K562 (cell line): ENCODE measurements at regions of chr9 and their contacts with region 1.

Region 1: DNA sequence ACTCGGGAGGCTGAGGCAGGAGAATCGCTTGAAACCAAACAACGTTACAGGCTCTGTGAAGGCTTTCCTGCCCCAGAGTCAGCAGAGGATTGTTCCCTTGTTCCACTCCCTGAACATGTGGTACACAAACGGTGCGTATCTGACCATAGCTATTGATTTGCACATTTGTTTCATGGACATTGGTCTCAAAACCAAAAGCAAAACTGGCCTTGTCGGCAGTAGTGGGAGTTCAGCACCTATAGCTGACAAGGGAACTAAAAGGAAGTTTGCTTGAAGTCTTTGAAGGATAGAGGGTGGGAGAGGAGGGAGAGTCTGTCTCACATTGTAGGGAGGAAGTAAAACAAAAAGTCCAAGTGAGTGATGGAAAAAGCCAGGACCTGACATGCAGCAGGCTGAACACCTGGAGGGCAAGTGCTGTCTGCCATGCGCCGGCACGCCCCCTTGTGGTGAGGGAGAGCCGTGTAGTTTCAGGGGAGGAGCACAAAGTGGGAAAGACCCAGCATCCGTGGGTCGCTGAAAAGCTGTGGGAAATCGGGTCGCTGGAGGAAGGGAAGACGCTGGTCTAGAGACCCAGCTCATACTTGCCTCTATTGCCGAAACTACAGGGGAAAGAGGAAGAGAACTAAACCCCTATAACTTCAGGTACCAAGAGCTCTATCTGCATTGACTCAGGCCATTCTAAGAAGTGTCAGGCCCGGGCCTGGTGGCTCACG is 58.0 kb downstream of the RAD23B start:
- DNase-seq: peak; percentile 74 to 82 (median 80)
- ATAC-seq: peak; percentile 90
- H3K4me3 ChIP-seq: no peak overlapping the region
- H3K27ac ChIP-seq: no peak overlapping the region
- H3K4me1 ChIP-seq: no peaks in the 10 kb centered on the region; a peak in 1 of 5 replicates
- H3K27me3 ChIP-seq: no peaks in the 10 kb centered on the region
- CTCF ChIP-seq: peak; percentile 84 to 94 (median 88)
- EP300 ChIP-seq: no peak
- POLR2A ChIP-seq: peak; percentile 49; the same call in 1 of the 2 replicates
- RAD21 ChIP-seq: peak; percentile 59 to 78

Region 2: GRCh38 chr9:107137495-107138202 is 203.4 kb before region 1 on chr9:
- CTCF ChIA-PET with region 1: no interaction called
- POLR2A ChIA-PET with region 1: no interaction called
- in situ Hi-C with region 1: no loop called
- intact Hi-C with region 1: loop called (anchors 10 kb)
- DNase-seq: peak; percentile 37 to 72 (median 60)
- ATAC-seq: peak; percentile 89
- H3K4me3 ChIP-seq: no peak overlapping the region
- H3K27ac ChIP-seq: no peak overlapping the region
- H3K4me1 ChIP-seq: no peaks in the 10 kb centered on the region
- H3K27me3 ChIP-seq: peaks cover 0 to 14% of the 10 kb centered on the region in 2 experiments; a peak in 3 of 5 replicates
- CTCF ChIP-seq: peak; percentile 49 to 71 (median 70); a peak in 5 of 6 replicates
- EP300 ChIP-seq: no peak
- POLR2A ChIP-seq: no peak
- RAD21 ChIP-seq: peak; percentile 40 to 64; a peak in 3 of 4 replicates

Region 3: DNA sequence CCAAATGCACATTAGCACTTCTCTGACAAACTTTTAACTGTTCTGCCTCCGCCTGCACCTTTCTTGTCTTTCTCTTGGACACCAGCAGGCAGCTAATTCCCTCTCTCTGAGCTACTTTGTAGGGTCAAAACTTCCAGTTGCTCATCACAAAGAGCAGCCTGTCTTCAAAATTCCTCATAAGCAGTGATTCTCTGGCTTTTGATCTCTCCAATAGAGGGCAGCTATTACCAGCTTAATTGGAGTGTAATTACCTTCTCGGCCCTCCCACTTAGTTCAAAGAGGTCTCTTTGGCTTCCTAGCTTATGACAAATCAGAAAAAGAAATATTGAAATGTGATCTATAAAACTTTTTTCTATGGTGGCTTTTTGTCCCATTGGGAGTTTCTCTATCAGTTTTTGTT is 101.6 kb before region 1 on chr9:
- CTCF ChIA-PET with region 1: interaction called, 8 read pairs
- POLR2A ChIA-PET with region 1: interaction called, 3 read pairs
- in situ Hi-C with region 1: no loop called
- intact Hi-C with region 1: loop called (anchors 1 kb)
- DNase-seq: peak in 2 of 4 experiments; percentile 16 to 19
- ATAC-seq: peak; percentile 68
- H3K4me3 ChIP-seq: no peak overlapping the region
- H3K27ac ChIP-seq: no peak overlapping the region
- H3K4me1 ChIP-seq: no peaks in the 10 kb centered on the region
- H3K27me3 ChIP-seq: no peaks in the 10 kb centered on the region
- CTCF ChIP-seq: peak; percentile 21 to 66 (median 37); a peak in 3 of 6 replicates
- EP300 ChIP-seq: no peak
- POLR2A ChIP-seq: no peak
- RAD21 ChIP-seq: peak; percentile 56 to 57